ENCODE measurements at regions of chr9 and their contacts with region 1.

Region 1: GRCh38 chr9:6412487-6413364 is at the start of gene UHRF2:
- DNase-seq: peak; percentile 81
- H3K4me3 ChIP-seq: peak within 1 kb of the TSS; percentile 90
- CTCF ChIP-seq: no peak

Region 2: GRCh38 chr9:6215562-6215961 is 197.2 kb before region 1 on chr9 and contains the start of gene IL33:
- CTCF ChIA-PET with region 1: no interaction called
- POLR2A ChIA-PET with region 1: no interaction called
- DNase-seq: no peak
- H3K4me3 ChIP-seq: no peak within 1 kb of the TSS
- CTCF ChIP-seq: no peak

Region 3: GRCh38 chr9:6367128-6367890 is 45.4 kb before region 1 on chr9:
- CTCF ChIA-PET with region 1: no interaction called
- POLR2A ChIA-PET with region 1: no interaction called
- DNase-seq: no peak
- H3K4me3 ChIP-seq: no peak overlapping the region
- CTCF ChIP-seq: no peak

Region 4: GRCh38 chr9:6383551-6384225 is 29.0 kb before region 1 on chr9:
- CTCF ChIA-PET with region 1: interaction called, 5 read pairs
- POLR2A ChIA-PET with region 1: interaction called, 10 read pairs
- DNase-seq: peak; percentile 7
- H3K4me3 ChIP-seq: no peak overlapping the region
- CTCF ChIP-seq: no peak

Region 5: DNA sequence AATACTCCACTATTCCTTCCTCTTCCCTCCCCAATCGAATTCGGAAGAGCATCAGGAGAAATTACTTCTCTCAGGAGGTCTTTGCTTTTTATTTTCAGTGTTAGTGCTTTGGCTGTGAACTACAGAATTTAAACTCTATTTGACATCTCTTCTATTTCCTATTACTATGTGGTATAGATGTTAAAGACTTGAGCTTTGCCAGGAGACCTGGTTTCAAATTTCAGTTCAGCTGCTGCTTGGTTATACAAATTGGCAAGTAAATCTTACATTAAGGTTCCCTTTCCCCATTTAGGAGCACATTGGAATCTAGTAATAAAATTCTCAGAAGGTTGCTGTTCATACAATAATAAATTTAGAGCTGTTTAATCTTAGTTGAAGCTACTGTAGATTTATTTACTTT is 13.4 kb after region 1 on chr9:
- CTCF ChIA-PET with region 1: interaction called, 14 read pairs
- POLR2A ChIA-PET with region 1: interaction called, 3 read pairs
- DNase-seq: no peak
- H3K4me3 ChIP-seq: no peak overlapping the region
- CTCF ChIP-seq: no peak